Activated naive CD4-positive, alpha-beta T cell treated with anti-CD3 and anti-CD28 coated beads for 36 hours (primary cell): ENCODE measurements at regions of chr14 and their contacts with region 1.

Region 1: DNA sequence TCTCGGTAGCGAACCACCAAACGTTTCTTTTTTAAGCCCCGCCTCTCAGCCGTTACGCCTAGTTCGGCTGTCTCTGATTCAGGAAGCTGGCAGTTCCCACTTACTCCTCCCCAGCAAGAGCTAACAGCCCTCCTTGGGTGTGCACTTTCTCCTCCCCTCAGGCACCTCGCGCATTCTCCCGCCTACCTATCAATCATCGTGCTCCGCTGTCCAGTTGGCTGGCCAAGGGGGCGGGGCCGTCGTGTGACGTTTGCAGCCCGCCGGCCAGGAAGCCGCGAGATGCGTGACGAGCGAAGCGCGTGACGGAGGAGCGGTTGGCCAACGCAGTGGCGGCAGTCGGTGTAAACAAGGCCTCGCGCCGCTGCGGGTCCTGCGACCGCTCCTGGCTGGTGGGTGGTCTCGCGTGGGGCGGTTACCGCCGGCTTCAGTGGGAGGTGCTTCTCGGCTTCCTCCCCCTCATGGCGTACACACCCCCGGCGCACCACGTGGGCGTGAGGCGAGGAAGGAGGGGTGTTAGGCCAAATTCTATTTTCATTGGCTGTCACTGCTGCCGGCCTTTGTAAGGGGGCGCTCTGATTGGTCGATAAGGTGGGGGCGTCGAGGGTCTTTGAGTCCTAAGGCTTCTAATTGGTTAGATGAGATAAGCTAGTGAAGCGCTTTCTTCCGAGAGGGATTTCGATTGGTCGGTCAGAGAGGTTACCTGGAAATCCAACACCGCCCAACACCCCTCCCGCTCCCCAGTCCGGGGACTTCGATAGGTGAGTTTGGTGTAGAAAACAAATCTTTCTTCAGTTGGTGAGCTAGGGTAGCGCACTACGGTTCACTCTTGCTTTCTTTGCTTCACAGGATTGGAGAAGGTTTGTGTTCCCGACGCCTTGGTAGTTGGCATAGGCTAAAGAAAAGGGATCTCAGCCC is at the starts of genes DCAF11 and NRL:
- DNase-seq: peak; percentile 99
- H3K4me3 Mint-ChIP-seq: peak within 1 kb of the TSS; percentile 99
- H3K27ac Mint-ChIP-seq: peak within 1 kb of the TSS; percentile 100
- H3K4me1 Mint-ChIP-seq: peaks cover 18% of the 10 kb centered on the region
- H3K27me3 Mint-ChIP-seq: no peaks in the 10 kb centered on the region
- total RNA-seq, gene DCAF11: 79.4 to 84.0 TPM
- total RNA-seq, gene NRL: 1.7 to 1.9 TPM

Region 2: GRCh38 chr14:23237772-23238594 is 876.8 kb before region 1 on chr14 and contains the start of gene RNF212B:
- CTCF ChIA-PET with region 1: no interaction called
- intact Hi-C with region 1: no loop called
- DNase-seq: peak; percentile 92
- H3K4me3 Mint-ChIP-seq: peak within 1 kb of the TSS; percentile 65
- H3K27ac Mint-ChIP-seq: no peak within 1 kb of the TSS
- H3K4me1 Mint-ChIP-seq: peaks cover 5% of the 10 kb centered on the region
- H3K27me3 Mint-ChIP-seq: peaks cover 10% of the 10 kb centered on the region
- total RNA-seq, gene RNF212B: not detected

Region 3: GRCh38 chr14:23301288-23301968 is 813.4 kb before region 1 on chr14:
- CTCF ChIA-PET with region 1: no interaction called
- intact Hi-C with region 1: loop called (anchors 10 kb)
- DNase-seq: peak; percentile 96
- H3K4me3 Mint-ChIP-seq: peak overlapping the region; percentile 90
- H3K27ac Mint-ChIP-seq: peak overlapping the region; percentile 92
- H3K4me1 Mint-ChIP-seq: peaks cover 12% of the 10 kb centered on the region
- H3K27me3 Mint-ChIP-seq: peaks cover 13% of the 10 kb centered on the region

Region 4: DNA sequence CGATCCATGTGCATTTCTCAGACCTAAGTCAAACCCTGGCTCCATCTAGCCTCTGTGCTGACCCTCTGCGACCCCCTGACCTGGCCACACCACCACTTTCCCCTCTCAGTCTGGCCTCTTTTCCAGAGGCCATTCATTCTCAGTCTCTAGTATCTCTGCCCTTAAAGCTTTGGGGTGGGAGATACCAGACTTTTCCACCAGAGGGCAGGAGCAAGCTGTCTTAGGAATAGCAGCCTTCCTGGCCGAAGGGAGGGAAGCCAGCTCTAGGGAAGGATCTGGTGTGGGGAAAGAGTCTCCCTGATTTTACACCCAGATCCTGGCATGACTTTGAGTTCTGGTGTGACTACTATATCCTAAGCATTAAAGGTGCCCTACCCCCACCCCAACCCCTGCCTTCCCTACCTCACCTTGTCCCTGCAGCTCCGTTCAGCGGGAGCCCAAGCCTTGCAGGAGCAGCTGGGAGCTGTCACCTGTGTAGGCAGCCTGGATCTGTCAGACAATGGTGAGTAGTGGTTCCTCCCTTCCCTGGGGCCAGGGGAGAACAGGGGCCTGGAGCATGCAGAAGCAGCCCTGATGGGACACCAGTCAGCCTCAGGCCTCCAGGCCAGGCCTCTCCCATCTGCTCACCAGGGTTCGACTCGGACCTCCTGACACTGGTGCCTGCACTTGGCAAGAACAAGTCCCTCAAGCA is 56.4 kb before region 1 on chr14:
- CTCF ChIA-PET with region 1: interaction called, 237 read pairs
- intact Hi-C with region 1: no loop called
- DNase-seq: peak; percentile 89
- H3K4me3 Mint-ChIP-seq: no peak overlapping the region
- H3K27ac Mint-ChIP-seq: peak overlapping the region; percentile 38
- H3K4me1 Mint-ChIP-seq: peaks cover 5% of the 10 kb centered on the region
- H3K27me3 Mint-ChIP-seq: peaks cover 2% of the 10 kb centered on the region

Region 5: DNA sequence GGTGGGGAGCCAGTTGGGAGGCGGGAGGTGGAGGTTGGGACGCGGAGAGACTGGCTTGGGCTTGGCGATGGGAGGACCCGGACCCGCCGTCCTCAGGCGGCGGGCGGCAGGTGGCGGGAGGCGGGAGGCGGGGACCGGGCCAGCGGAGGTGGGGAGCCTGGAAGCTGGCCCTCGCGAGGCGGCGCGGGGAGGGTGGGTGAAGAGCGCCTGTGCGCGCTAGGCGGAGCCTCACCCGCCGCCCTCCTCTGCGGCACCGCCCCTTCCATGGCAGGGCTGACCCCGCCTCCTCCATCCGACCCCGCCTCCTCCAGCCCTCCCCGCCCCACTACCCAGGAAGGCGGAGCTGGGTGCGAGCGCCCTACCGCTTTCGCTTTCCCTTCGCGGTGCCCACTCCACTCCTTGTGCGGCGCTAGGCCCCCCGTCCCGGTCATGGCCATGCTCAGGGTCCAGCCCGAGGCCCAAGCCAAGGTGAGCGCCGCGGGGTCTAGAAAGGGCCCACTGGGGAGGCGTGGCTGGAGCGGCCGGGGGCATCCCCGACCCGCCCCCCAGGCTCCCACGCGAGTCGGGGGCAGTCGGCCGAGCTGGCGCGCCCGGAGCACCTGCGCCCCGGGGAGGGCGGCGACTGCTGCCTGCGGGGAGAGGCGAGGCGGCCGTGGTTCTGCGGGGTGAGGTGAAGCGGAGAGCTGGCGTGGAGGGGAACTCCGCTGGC is 21.2 kb after region 1 on chr14 and contains the start of gene PSME1:
- CTCF ChIA-PET with region 1: interaction called, 43 read pairs
- intact Hi-C with region 1: loop called (anchors 1 kb)
- DNase-seq: peak; percentile 97
- H3K4me3 Mint-ChIP-seq: peak within 1 kb of the TSS; percentile 86
- H3K27ac Mint-ChIP-seq: peak within 1 kb of the TSS; percentile 93
- H3K4me1 Mint-ChIP-seq: peaks cover 52% of the 10 kb centered on the region
- H3K27me3 Mint-ChIP-seq: no peaks in the 10 kb centered on the region
- total RNA-seq, gene PSME1: 406 to 416 TPM

Region 6: DNA sequence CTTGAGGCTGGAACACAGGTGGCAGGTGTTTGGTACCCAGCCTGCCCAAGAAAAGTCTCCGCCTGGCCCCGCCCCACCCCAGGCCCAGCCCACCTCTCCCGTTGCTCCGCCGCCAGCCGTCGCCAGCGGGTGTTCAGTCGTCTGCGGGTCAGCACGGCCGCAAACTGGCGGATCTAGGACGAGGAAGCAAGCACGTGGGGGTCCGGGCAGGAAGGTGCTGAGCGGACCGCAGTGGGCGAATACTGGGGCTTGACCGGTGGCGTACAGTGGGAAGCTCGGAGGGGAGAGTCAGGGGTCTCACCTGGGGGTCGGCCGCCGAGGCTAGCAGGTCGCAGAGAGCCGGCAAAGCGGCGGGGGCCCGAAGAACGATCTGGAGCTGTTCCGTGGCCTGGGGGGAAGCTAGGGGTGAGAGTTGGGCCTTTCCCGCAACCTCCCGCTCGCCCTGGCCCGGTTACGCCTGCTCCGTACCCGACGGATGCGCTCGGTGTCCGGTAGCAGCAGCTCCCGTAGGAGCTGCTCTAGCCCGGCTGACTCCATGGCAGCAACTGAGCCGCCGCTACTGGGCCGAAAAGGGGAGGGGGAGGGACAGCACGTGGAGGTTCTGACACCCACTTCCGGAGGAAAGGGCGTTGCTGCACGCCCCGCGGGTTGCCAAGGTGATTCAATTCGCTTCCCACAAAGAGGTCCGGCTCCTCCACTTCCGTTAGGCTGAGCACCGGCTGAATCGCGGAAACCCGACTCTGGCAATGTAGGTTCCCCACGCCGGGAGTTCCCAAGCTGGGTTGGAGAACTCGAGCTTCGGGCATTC is 73.7 kb after region 1 on chr14 and contains the start of gene IPO4:
- CTCF ChIA-PET with region 1: no interaction called
- intact Hi-C with region 1: loop called (anchors 1 kb)
- DNase-seq: peak; percentile 97
- H3K4me3 Mint-ChIP-seq: peak within 1 kb of the TSS; percentile 85
- H3K27ac Mint-ChIP-seq: peak within 1 kb of the TSS; percentile 78
- H3K4me1 Mint-ChIP-seq: peaks cover 46% of the 10 kb centered on the region
- H3K27me3 Mint-ChIP-seq: no peaks in the 10 kb centered on the region
- total RNA-seq, gene IPO4: 64.2 to 74.5 TPM

Region 7: DNA sequence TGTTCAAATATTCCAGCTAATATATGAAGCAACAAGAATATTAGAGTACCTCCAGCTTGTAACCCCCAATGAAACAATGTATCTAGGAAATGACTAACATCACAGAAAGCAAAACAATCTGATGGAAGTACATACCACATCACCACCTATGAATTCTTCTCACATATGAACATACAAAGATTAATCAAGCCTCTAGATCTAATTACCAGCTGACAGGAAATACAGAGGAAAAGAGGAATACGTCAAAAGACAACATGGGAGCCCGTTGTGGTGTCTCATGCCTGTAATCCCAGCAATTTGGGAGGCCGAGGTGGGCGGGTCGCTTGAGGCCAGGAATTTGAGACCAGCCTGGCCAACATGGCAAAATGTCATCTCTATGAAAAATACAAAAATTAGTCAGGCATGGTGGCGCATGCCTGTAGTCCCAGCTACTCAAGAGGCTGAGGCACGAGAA is 109.9 kb after region 1 on chr14:
- CTCF ChIA-PET with region 1: no interaction called
- intact Hi-C with region 1: no loop called
- DNase-seq: no peak
- H3K4me3 Mint-ChIP-seq: no peak overlapping the region
- H3K27ac Mint-ChIP-seq: peak overlapping the region; percentile 36
- H3K4me1 Mint-ChIP-seq: peaks cover 33% of the 10 kb centered on the region
- H3K27me3 Mint-ChIP-seq: no peaks in the 10 kb centered on the region

Region 8: DNA sequence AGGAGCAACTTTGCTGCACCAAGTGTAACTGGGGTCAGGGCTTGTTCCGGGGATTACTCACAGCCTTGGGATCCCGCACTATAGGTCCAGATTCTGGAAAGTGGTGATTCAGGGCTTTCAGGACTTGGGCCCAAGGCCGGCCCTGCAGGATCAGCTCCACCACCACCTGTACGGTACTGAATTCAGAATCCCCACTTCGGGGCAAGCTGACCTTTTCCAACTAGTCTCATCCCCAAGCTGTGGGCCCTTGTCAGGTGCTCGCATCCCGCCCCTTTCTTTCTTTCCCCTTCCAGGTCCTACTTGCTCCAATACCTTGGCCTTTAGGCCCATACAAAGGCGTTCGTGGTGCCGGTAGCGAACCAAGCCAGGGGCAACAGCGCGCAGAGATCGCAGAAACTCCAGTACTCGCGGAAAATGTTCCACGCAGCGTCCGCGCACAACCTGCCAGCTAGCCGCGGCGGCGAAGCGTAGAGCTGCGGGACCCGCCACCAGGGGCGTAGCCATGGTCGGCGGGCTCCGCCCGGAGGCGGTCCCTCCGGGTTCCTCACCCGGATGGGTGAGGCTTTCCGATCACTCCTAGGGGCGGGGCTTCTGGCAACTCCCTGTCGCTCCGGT is 127.1 kb after region 1 on chr14:
- CTCF ChIA-PET with region 1: interaction called, 6 read pairs
- intact Hi-C with region 1: loop called (anchors 1 kb)
- DNase-seq: peak; percentile 94
- H3K4me3 Mint-ChIP-seq: peak overlapping the region; percentile 97
- H3K27ac Mint-ChIP-seq: peak overlapping the region; percentile 100
- H3K4me1 Mint-ChIP-seq: peaks cover 49% of the 10 kb centered on the region
- H3K27me3 Mint-ChIP-seq: no peaks in the 10 kb centered on the region

Region 9: GRCh38 chr14:24310646-24311604 is 196.1 kb after region 1 on chr14 and contains the start of gene LTB4R:
- CTCF ChIA-PET with region 1: interaction called, 3 read pairs
- intact Hi-C with region 1: loop called (anchors 1 kb)
- DNase-seq: peak; percentile 71
- H3K4me3 Mint-ChIP-seq: peak within 1 kb of the TSS; percentile 71
- H3K27ac Mint-ChIP-seq: peak within 1 kb of the TSS; percentile 68
- H3K4me1 Mint-ChIP-seq: peaks cover 64% of the 10 kb centered on the region
- H3K27me3 Mint-ChIP-seq: no peaks in the 10 kb centered on the region
- total RNA-seq, gene LTB4R: 10.6 to 11.4 TPM